AG04450 (cell line): ENCODE measurements at regions of chr5 and their contacts with region 1.

Region 1: GRCh38 chr5:138178516-138179276 is at the starts of genes BRD8 and KIF20A:
- DNase-seq: peak; percentile 85
- H3K4me3 ChIP-seq: peak within 1 kb of the TSS; percentile 99
- H3K27ac ChIP-seq: peak within 1 kb of the TSS; percentile 91
- H3K27me3 ChIP-seq: no peaks in the 10 kb centered on the region
- CTCF ChIP-seq: no peak
- polyA plus RNA-seq, gene BRD8: 59.6 and 72.2 TPM in 2 replicates
- polyA plus RNA-seq, gene KIF20A: 21.8 and 25.4 TPM in 2 replicates

Region 2: DNA sequence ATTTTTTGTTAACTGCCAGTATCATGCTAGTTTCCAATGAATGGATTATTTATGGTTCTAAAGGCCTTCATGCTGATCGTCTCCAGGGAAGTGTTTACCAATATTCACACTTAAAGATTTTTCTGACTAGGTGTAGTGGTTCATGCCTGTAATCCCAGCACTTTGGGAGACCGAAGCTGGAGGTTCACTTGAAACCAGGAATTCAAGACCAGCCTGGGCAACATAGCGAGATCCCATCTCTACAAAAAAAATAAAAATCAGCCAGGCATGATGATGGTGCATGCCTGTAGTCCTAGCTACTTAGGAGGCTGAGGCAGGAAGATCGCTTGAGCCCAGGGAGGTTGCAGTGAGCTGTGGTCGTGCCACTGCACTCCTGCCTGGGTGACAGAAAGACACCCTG is 189.3 kb before region 1 on chr5:
- CTCF ChIA-PET with region 1: no interaction called
- POLR2A ChIA-PET with region 1: no interaction called
- DNase-seq: no peak
- H3K4me3 ChIP-seq: no peak overlapping the region
- H3K27ac ChIP-seq: no peak overlapping the region
- H3K27me3 ChIP-seq: no peaks in the 10 kb centered on the region
- CTCF ChIP-seq: no peak

Region 3: GRCh38 chr5:138213161-138214029 is 34.7 kb after region 1 on chr5 and contains the start of gene CDC23:
- CTCF ChIA-PET with region 1: no interaction called
- POLR2A ChIA-PET with region 1: interaction called, 10 read pairs
- DNase-seq: peak; percentile 91
- H3K4me3 ChIP-seq: peak within 1 kb of the TSS; percentile 98
- H3K27ac ChIP-seq: peak within 1 kb of the TSS; percentile 77
- H3K27me3 ChIP-seq: no peaks in the 10 kb centered on the region
- CTCF ChIP-seq: no peak
- polyA plus RNA-seq, gene CDC23: 30.4 and 38.1 TPM in 2 replicates

Region 4: DNA sequence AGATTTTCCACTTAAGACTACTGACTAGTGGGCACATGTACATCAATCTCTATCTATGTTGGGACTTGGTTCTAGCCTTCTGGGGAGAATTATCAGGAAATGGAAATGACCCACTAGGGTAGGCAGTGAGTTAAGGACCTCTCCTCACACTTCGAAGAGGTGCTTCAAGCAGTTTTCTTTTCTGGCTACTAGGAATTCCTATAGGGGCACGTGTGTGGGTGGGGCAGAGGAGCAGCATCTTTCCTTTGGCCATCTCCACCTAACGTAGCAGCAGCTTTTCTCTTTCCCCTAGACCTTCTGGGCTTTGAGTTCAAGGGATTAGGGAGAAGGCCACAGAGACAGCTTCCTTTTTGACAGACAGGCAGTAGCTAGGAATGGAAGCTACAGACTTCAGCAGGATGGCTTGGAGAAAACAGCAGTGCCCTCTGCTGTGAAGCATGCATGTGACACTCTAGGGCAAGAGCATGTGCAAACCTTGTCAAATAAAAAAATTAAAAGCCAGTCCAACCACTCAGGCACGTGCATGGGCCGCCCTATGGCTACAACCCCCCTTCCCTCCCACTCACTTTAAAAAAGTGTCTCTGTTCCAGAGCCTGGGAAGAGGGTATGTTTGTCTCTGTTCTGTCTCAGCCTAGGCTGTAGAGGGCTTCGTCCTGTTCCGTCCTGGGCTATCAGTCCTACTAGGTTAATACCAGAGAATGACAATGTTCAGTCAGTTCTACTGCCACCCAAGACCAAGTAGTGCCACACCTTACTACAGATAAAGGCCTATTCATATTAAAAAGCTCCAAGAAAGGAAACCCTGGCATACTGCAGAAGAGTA is 104.4 kb after region 1 on chr5:
- CTCF ChIA-PET with region 1: interaction called, 10 read pairs
- POLR2A ChIA-PET with region 1: no interaction called
- DNase-seq: peak; percentile 20
- H3K4me3 ChIP-seq: no peak overlapping the region
- H3K27ac ChIP-seq: no peak overlapping the region
- H3K27me3 ChIP-seq: no peaks in the 10 kb centered on the region
- CTCF ChIP-seq: peak; percentile 68